Activated CD8-positive, alpha-beta T cell treated with anti-CD3 and anti-CD28 coated beads, Interleukin-2, amount 10 ng/mL, durations not matched to agents 7 days and 5 days (primary cell): ENCODE measurements at regions of chr1 and their contacts with region 1.

Region 1: DNA sequence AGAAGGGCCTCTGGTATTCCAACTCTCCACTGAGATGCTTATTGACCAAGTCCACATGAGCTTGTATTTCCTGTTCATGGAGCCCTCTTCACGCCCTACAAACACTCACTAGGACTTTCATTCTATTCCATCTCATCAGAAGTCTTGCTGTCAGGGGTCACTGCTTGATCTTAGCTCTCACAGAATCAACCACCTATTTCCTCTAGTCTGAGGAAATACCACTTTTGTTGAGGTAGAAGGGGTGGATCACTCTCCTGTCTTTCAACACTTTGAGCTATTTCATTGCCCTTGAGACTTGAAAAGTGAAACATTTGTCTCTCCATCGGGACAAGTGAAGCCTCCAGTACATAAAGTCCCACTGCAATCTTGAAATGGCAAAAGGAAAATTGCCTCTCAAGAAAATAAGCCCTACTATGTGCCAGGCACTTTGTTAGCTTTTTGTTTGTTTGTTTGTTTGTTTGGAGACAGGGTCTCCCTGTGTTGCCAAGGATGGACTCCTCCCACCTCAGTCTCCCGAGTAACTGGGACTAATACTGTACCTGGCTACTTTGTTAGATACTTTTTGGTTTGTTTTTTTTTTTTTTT is 19.8 kb upstream of the FAM110D start:
- DNase-seq: peak; percentile 38
- ATAC-seq: peak; percentile 92
- H3K4me3 Mint-ChIP-seq: peak overlapping the region; percentile 40
- H3K27ac Mint-ChIP-seq: peak overlapping the region; percentile 77
- H3K4me1 Mint-ChIP-seq: peaks cover 15% of the 10 kb centered on the region
- H3K27me3 Mint-ChIP-seq: peaks cover 7% of the 10 kb centered on the region

Region 2: GRCh38 chr1:26102526-26102925 is 36.5 kb before region 1 on chr1:
- CTCF ChIA-PET with region 1: interaction called, 356 read pairs
- POLR2A ChIA-PET with region 1: no interaction called
- DNase-seq: no peak
- ATAC-seq: no peak
- H3K4me3 Mint-ChIP-seq: no peak overlapping the region
- H3K27ac Mint-ChIP-seq: no peak overlapping the region
- H3K4me1 Mint-ChIP-seq: peaks cover 14% of the 10 kb centered on the region
- H3K27me3 Mint-ChIP-seq: peaks cover 11% of the 10 kb centered on the region

Region 3: GRCh38 chr1:26111530-26112406 is 27.3 kb before region 1 on chr1 and contains the start of gene PDIK1L:
- CTCF ChIA-PET with region 1: interaction called, 356 read pairs
- POLR2A ChIA-PET with region 1: interaction called, 20 read pairs
- DNase-seq: peak; percentile 95
- ATAC-seq: peak; percentile 86
- H3K4me3 Mint-ChIP-seq: peak within 1 kb of the TSS; percentile 95
- H3K27ac Mint-ChIP-seq: peak within 1 kb of the TSS; percentile 91
- H3K4me1 Mint-ChIP-seq: peaks cover 30% of the 10 kb centered on the region
- H3K27me3 Mint-ChIP-seq: no peaks in the 10 kb centered on the region
- total RNA-seq, gene PDIK1L: 21.3 to 25.4 TPM